ENCODE measurements at regions of chr12 and their contacts with region 1.

Region 1: GRCh38 chr12:113048716-113049127 is 7.8 kb upstream of the DTX1 start:
- DNase-seq: peak in 1 of 3 donors; percentile 70
- ATAC-seq: peak; percentile 70 to 78
- H3K4me3 ChIP-seq: no peak overlapping the region
- H3K27ac ChIP-seq: no peak overlapping the region
- H3K4me1 ChIP-seq: no peaks in the 10 kb centered on the region
- H3K27me3 ChIP-seq: no peaks in the 10 kb centered on the region

Region 2: GRCh38 chr12:113098446-113098896 is 49.7 kb after region 1 on chr12:
- intact Hi-C with region 1: loop called in 2 of 4 experiments (anchors 5 kb)
- DNase-seq: peak; percentile 86 to 93 (median 91)
- ATAC-seq: peak; percentile 85 to 89
- H3K4me3 ChIP-seq: no peak overlapping the region
- H3K27ac ChIP-seq: no peak overlapping the region
- H3K4me1 ChIP-seq: no peaks in the 10 kb centered on the region
- H3K27me3 ChIP-seq: no peaks in the 10 kb centered on the region

Region 3: GRCh38 chr12:113152835-113153814 is 104.4 kb after region 1 on chr12:
- intact Hi-C with region 1: loop called in 3 of 4 experiments (anchors 5 to 10 kb)
- DNase-seq: peak; percentile 74 to 89 (median 88)
- ATAC-seq: peak; percentile 84 to 89
- H3K4me3 ChIP-seq: peak overlapping the region; percentile 13
- H3K27ac ChIP-seq: no peak overlapping the region
- H3K4me1 ChIP-seq: no peaks in the 10 kb centered on the region
- H3K27me3 ChIP-seq: no peaks in the 10 kb centered on the region

Region 4: DNA sequence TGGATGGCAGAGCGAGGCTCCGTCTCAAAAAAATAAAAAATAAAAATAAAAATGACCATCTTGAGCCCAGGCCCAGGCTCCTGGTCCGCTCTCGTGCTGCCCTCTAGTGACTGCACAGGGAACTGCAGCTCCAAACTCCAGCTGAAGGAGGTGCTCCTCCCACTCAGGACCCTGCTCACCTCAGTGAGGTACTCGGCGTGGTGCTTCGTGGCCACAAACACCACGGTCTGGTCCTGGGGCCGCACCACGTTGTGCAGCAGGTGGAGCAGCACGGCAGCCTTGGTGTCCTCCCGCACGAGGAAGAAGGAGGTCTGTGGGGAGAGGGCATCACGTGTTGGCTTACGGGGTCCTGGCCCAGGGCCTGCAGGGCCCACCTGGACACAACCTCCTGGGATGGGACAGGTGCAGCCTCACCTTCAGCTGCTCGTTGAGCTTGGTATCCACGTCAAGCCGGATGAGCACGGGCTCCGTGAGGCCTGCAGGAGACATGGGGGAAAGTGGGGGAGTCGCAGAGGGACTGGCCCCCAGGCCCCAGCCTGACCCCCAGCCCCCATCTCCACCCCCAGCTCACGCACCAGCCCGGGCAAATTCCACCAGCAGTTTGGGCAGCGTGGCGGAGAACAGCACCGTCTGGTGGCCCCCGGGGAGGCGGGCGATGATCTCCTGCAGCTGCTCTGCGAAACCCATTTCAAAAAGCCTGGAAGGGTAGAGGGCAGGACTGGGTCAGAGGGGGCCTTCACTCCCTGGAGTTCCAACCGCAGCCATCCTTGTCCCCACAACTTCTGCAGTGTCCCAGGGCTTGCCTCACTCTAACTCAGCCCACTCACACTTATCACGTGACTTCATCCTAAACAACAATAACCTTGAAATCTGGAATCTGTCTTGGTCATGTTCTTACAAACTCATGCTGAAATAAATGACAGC is 126.0 kb after region 1 on chr12:
- intact Hi-C with region 1: loop called in 2 of 4 experiments (anchors 2 to 5 kb)
- DNase-seq: peak; percentile 67 to 88 (median 85)
- ATAC-seq: peak; percentile 49 to 68
- H3K4me3 ChIP-seq: no peak overlapping the region
- H3K27ac ChIP-seq: no peak overlapping the region
- H3K4me1 ChIP-seq: no peaks in the 10 kb centered on the region
- H3K27me3 ChIP-seq: no peaks in the 10 kb centered on the region

Region 5: DNA sequence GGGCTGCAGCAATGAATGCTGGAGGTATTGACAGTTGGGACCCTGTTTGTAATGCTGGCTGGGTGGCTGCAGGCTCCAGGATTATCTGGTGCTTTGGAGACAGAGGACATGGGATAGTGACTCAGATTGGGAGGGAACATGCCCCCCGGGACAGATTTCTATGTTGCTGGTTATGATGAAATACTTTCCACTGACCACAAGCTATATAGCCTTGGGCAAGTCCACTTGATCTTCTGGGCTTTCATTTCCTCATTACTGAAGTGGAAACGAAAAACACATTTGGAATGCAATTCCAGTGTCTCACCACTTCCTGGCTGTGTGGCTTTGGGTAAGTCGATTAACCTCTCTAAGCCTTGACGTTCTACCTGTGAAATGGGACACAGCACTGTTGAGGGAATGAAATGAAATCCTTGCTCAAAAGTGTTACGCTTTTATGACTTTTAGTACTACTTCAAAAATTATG is 166.2 kb after region 1 on chr12:
- intact Hi-C with region 1: no loop called
- DNase-seq: peak; percentile 77 to 86 (median 86)
- ATAC-seq: peak; percentile 93 to 95
- H3K4me3 ChIP-seq: no peak overlapping the region
- H3K27ac ChIP-seq: peak overlapping the region; percentile 30
- H3K4me1 ChIP-seq: peaks cover 2% of the 10 kb centered on the region
- H3K27me3 ChIP-seq: no peaks in the 10 kb centered on the region

Measured in right cardiac atrium (tissue), 5 donors.